Heart right ventricle (tissue), 16 donors: ENCODE measurements at regions of chr11 and their contacts with region 1.

Region 1: GRCh38 chr11:108467091-108467823 is at the start of gene C11orf65:
- DNase-seq: peak; percentile 94 to 97
- ATAC-seq: peak; percentile 99 to 100 (median 100)
- H3K4me3 ChIP-seq: peak within 1 kb of the TSS; percentile 51 to 74 (median 66)
- H3K27ac ChIP-seq: peak within 1 kb of the TSS; percentile 94 to 99 (median 98)
- H3K4me1 ChIP-seq: peaks cover 0 to 22% (median 8%) of the 10 kb centered on the region in 9 donors
- H3K27me3 ChIP-seq: no peaks in the 10 kb centered on the region
- CTCF ChIP-seq: no peak
- total RNA-seq, gene C11orf65: 0.39 to 1.6 (median 1.1) TPM in 9 of 10 donors, not detected in the other

Region 2: DNA sequence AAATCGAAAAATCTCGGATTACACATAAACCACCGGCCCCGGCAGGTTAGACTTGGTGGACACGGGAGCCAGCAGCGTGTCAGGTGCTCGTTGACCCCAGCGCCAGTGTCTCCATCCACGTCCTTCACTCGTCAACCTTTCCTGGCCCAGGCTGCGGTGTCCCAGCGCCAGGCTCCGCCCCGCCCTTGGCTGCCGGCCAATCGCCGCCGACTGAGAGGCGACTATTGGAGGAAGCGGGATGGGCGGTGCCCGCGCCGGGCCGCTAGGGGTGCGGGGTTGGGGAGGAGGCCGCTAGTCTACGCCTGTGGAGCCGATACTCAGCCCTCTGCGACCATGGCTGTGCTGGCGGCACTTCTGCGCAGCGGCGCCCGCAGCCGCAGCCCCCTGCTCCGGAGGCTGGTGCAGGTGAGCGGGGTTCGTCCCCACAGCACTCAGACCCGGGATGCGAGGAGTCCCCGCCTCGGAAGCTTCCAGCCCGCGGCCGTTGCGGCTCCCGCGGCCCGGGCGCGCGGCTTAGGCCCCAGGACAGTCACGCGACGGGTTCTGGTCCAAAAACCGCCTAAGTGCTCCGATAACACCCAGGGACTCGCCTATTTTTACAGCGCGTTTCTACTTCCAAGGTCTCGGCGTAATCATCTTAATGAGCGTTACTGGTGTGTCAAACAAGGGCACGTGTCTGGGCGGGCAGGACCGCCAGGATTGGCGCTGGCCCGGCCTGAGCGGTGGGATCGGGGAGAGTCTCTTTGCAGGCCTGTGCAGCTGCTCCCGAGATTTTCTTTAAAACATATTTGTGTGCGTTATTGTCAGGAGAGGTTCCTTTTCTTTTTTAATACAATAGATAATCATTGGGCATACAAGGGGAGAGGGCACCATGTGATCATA is 345.7 kb before region 1 on chr11 and contains the start of gene ACAT1:
- intact Hi-C with region 1: loop called in 1 of 10 experiments (anchors 10 kb)
- DNase-seq: peak; percentile 98 to 99
- ATAC-seq: peak; percentile 95 to 97 (median 96)
- H3K4me3 ChIP-seq: peak within 1 kb of the TSS; percentile 59 to 90 (median 74)
- H3K27ac ChIP-seq: peak within 1 kb of the TSS; percentile 92 to 99 (median 96)
- H3K4me1 ChIP-seq: peaks cover 9 to 54% (median 38%) of the 10 kb centered on the region in 9 donors
- H3K27me3 ChIP-seq: no peaks in the 10 kb centered on the region
- CTCF ChIP-seq: peak in 8 of 9 donors; percentile 5 to 51 (median 38)
- total RNA-seq, gene ACAT1: 219 to 535 (median 412) TPM

Region 3: DNA sequence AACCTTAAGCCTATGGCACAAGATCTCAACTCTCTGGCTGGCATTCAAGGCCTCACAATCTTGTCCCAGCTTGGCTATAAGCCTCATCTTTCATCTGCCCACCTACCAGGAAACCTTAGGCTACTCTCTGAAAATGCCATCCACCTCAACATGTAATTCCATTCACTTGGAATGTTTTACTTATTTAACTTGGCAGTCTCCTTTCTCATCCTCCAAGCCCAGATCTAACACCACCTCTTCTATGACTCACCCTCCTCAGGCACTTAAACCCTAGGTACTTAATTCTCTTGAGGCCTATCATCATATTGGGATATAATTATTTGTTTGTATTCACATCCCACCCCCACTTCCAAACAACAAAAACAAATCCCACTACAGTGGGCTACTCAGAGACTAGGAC is 15.9 kb after region 1 on chr11:
- intact Hi-C with region 1: no loop called
- DNase-seq: no peak
- ATAC-seq: no peak
- H3K4me3 ChIP-seq: no peak overlapping the region
- H3K27ac ChIP-seq: no peak overlapping the region
- H3K4me1 ChIP-seq: no peaks in the 10 kb centered on the region
- H3K27me3 ChIP-seq: no peaks in the 10 kb centered on the region
- CTCF ChIP-seq: no peak

Region 4: DNA sequence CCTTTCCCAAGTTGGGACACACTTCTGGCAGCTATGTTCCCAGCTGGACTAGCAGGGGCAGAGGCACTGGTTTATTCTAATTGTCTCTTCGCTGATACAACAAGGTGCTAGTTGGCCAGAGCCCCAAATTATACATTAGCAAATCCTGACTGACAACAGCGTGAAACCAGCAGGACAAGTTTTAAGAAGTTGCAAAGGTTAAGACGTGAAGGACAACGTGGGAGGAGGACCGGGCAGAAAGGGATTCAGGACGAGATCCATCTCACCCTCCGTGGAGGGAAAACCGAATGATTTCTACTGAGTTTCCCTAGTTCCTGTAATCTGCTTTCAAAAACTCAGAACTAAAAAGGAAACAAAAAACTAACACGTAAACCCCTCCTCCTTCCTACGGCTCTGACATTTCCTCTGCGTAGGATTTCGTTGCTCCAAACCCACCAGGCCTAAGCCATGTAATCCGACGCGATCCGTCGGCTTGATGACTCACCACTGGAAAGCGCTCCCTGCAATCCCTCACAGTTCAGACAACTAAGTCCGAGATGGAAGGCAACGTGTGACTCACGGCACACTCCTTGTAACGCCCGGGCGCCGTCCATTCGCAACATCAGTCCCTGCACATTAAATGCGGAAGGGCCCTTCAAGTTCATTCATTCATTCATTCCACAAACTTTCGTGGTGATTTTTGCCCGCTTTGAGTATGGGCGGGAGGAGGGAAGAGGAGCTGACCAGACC is 30.2 kb after region 1 on chr11:
- intact Hi-C with region 1: loop called in 3 of 10 experiments (anchors 1 to 2 kb)
- DNase-seq: peak; percentile 77 to 89
- ATAC-seq: peak; percentile 93 to 98 (median 96)
- H3K4me3 ChIP-seq: peak overlapping the region; percentile 62 to 83 (median 76)
- H3K27ac ChIP-seq: peak overlapping the region; percentile 83 to 100 (median 95)
- H3K4me1 ChIP-seq: peaks cover 3 to 22% (median 18%) of the 10 kb centered on the region in 9 donors
- H3K27me3 ChIP-seq: no peaks in the 10 kb centered on the region
- CTCF ChIP-seq: no peak